ENCODE measurements at regions of chr9 and their contacts with region 1.

Region 1: GRCh38 chr9:107919263-107919662 is 429.7 kb upstream of the KLF4 start:
- DNase-seq: no peak
- ATAC-seq: no peak
- H3K4me3 ChIP-seq: no peak overlapping the region
- H3K27ac ChIP-seq: no peak overlapping the region
- H3K4me1 ChIP-seq: no peaks in the 10 kb centered on the region
- H3K27me3 ChIP-seq: no peaks in the 10 kb centered on the region
- CTCF ChIP-seq: no peak

Region 2: DNA sequence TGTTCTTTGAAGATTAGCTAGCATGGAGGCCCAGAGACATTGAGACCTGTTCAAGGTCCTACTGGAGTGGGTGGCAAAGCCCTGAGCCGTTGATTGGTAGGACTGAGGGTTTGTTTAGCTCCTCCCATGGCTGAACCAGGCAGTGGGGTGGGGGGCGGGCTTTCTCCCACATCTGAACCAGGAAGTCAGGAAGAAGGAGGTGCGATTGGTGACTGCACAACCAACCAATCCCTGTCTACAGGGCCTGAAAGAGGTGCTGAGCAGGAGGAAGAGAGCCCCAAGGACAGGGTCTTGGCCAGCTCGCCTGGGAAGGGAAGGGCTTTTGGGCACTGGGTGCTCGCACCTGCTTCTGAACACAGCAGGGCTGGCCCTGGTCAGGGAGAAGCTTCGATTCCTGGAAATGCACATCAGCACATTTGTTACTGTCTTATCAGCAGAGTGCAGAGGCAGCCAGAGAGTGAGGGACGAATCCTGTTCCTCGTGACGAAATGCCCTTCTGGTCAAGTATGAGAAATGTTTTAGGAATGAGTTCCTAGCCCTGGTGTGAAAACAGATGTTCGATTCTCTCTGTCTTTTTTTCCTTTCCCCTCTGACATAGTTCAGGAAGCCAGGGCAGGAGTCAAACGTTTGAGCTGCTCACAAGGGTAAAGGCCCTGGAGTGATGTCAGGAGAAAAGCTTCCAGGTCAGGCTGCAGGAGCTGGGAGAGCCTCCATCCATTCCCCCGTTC is 134.9 kb before region 1 on chr9:
- CTCF ChIA-PET with region 1: no interaction called
- POLR2A ChIA-PET with region 1: no interaction called
- in situ Hi-C with region 1: no loop called
- intact Hi-C with region 1: no loop called
- DNase-seq: no peak
- ATAC-seq: no peak
- H3K4me3 ChIP-seq: no peak overlapping the region
- H3K27ac ChIP-seq: no peak overlapping the region
- H3K4me1 ChIP-seq: no peaks in the 10 kb centered on the region
- H3K27me3 ChIP-seq: no peaks in the 10 kb centered on the region
- CTCF ChIP-seq: no peak

Region 3: DNA sequence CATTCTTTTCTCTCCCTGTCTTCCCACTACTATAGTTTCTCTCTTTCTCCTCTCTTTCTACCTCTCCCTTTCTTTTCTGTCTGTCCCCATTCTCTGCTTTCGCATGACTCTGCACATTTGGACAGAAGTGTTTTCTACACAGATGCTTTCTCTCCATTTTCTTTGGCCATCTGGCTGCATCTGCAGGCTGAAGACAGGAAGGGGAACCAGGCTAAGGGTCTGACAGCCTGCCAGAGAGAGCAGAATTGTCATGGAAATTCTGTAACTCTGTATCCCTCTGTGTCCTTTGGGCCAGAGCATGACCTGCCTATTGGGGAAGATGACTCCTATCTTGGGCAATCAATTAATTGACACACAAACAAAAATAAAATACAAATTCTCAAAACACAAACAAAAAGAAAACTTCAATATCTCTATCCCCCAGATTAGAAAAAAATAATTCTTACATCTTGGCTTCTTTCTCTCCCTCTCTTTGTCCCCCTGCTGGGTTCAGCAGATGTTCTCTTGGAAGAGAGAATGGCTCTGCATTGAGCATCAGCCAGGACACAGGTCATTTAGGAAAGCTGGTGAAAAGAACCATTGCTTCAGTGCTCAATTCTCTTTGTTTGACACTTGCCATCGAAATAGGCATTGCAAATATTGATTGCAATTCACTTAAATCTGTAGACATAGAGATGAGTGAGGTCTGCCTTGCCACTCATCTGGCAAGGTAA is 13.8 kb before region 1 on chr9:
- CTCF ChIA-PET with region 1: no interaction called
- POLR2A ChIA-PET with region 1: no interaction called
- in situ Hi-C with region 1: no loop called
- intact Hi-C with region 1: no loop called
- DNase-seq: no peak
- ATAC-seq: no peak
- H3K4me3 ChIP-seq: no peak overlapping the region
- H3K27ac ChIP-seq: no peak overlapping the region
- H3K4me1 ChIP-seq: no peaks in the 10 kb centered on the region
- H3K27me3 ChIP-seq: no peaks in the 10 kb centered on the region
- CTCF ChIP-seq: no peak

Region 4: DNA sequence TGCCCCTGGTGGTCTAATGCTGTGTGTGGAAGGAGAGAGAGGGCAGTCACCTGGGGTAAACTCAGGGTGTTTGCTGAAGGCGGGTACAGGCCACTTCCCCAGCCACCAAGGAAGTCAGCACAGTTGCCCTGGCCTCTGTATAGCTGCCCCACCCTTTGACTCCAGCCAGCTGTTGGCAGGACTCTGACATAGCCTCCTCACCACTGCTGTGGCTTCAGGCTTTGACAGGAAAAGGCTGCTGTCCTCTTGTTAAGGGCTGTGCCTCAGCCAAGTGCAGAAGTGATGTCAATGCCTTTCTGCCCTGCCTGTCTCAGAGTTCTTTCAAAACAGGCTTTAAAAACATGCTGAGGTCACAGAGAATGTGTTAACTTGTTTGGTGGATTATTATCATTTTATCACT is 57.5 kb after region 1 on chr9:
- CTCF ChIA-PET with region 1: no interaction called
- POLR2A ChIA-PET with region 1: no interaction called
- in situ Hi-C with region 1: no loop called
- intact Hi-C with region 1: loop called (anchors 10 kb)
- DNase-seq: no peak
- ATAC-seq: no peak
- H3K4me3 ChIP-seq: no peak overlapping the region
- H3K27ac ChIP-seq: no peak overlapping the region
- H3K4me1 ChIP-seq: no peaks in the 10 kb centered on the region
- H3K27me3 ChIP-seq: no peaks in the 10 kb centered on the region
- CTCF ChIP-seq: no peak

Region 5: DNA sequence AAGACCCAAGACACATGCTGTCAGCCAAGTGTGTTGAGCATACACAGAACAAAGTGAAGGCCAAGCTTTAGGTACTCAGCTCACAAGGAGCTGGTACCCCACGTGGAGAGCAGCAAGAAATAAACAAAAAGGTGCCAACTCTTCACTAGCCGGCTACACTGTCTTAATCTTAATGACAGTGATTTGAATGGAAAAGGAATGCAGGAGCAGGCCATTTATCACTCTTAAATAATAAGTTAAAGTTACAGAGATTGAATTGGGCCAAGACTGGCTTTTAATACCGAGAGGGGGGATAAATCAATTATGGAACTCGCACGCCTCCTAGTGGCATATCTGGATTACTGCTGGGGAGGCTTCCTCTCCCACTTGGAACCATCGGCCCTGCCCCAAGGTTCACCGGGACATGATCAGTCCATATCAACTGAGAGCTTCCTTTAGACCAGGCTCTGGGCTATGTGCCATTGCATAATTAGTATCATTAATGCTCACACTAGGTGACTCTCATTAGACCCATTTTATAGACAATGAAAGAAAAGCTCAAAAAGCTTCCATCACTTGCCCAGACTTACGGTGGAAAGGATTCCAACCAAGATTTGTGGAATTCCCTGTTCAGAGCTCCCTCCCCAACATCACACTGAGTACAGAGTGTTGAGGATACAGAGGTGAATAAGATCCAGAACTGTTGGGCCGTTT is 842.5 kb after region 1 on chr9:
- CTCF ChIA-PET with region 1: no interaction called
- POLR2A ChIA-PET with region 1: no interaction called
- in situ Hi-C with region 1: no loop called
- intact Hi-C with region 1: no loop called
- DNase-seq: peak; percentile 28
- ATAC-seq: peak; percentile 80
- H3K4me3 ChIP-seq: no peak overlapping the region
- H3K27ac ChIP-seq: no peak overlapping the region
- H3K4me1 ChIP-seq: no peaks in the 10 kb centered on the region
- H3K27me3 ChIP-seq: no peaks in the 10 kb centered on the region
- CTCF ChIP-seq: peak; percentile 87

Measured in Panc1 (cell line).